AG04449 (cell line): ENCODE measurements at regions of chr4 and their contacts with region 1.

Region 1: GRCh38 chr4:15231265-15232091 is 196.4 kb upstream of the C1QTNF7 start:
- DNase-seq: no peak
- H3K4me3 ChIP-seq: no peak overlapping the region
- CTCF ChIP-seq: peak; percentile 69

Region 2: GRCh38 chr4:14810568-14810967 is 420.9 kb before region 1 on chr4:
- CTCF ChIA-PET with region 1: no interaction called
- POLR2A ChIA-PET with region 1: no interaction called
- DNase-seq: no peak
- H3K4me3 ChIP-seq: no peak overlapping the region
- CTCF ChIP-seq: no peak

Region 3: DNA sequence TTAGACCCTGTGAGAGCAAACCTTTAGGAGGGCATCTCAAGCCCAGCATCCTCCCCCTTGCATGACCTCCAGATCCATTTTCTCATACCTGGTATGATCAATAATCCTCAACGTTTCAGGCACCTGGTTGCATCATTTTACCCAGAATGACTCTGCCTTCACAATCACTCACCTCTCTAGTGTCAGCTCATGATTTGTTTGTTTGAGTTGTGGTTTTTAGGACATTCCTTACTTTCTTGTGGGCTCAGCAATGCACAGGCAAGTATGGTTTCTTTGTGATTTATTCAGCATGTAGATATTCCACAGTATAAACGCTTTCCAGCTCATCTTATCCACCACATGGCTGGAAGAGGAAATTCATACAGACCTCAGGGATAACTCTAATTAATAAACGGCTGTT is 322.8 kb before region 1 on chr4:
- CTCF ChIA-PET with region 1: no interaction called
- POLR2A ChIA-PET with region 1: no interaction called
- DNase-seq: no peak
- H3K4me3 ChIP-seq: no peak overlapping the region
- CTCF ChIP-seq: no peak

Region 4: GRCh38 chr4:15144249-15144966 is 87.1 kb before region 1 on chr4:
- CTCF ChIA-PET with region 1: no interaction called
- POLR2A ChIA-PET with region 1: no interaction called
- DNase-seq: no peak
- H3K4me3 ChIP-seq: no peak overlapping the region
- CTCF ChIP-seq: no peak

Region 5: GRCh38 chr4:15244354-15244753 is 12.9 kb after region 1 on chr4:
- CTCF ChIA-PET with region 1: interaction called, 10 read pairs
- POLR2A ChIA-PET with region 1: no interaction called
- DNase-seq: no peak
- H3K4me3 ChIP-seq: no peak overlapping the region
- CTCF ChIP-seq: no peak

Region 6: GRCh38 chr4:15469402-15470127 is 238.1 kb after region 1 on chr4 and contains the start of gene CC2D2A:
- CTCF ChIA-PET with region 1: interaction called, 22 read pairs
- POLR2A ChIA-PET with region 1: interaction called, 3 read pairs
- DNase-seq: no peak
- H3K4me3 ChIP-seq: peak within 1 kb of the TSS; percentile 55
- CTCF ChIP-seq: no peak